Transverse colon (tissue), 4 donors: ENCODE measurements at regions of chr21 and their contacts with region 1.

Region 1: DNA sequence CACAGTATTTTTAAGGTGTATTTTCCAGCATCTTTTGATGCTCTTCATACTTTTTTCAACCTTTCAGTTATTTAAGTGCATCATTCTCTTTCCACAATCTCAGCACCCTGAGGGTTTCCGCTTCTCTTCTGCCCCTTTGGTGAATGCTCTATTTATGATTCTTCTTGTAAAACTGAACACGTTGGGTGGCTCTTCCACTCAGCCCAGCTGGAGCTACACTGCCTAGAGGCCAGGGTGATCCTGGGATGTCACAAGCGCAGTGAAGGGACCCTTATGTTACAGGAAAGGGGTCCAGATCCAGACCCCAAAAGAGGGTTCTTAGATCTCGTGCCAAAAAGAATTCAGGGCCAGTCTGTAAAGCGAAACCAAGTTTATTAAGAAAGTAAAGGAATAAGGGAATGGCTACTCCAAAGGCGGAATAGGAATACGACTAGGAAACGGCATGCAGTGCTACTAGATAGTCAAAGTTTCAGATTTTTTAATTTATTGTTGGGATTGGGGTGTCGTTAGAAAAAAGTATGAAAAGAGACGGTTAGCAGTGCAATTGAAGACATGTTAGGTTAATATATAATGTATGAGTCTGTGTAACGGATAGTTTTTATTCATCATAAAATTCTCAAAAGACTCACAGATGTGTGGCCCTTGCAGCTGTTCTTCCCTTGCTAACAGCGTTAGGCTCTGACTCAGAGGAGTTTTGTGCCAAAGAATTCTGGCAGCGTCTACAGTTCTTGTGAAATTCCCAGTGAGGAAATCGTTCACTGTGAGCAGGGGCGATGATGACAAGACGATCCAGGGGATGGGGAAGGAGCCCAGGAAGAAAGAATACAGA is 14.4 kb upstream of the ERVH48-1 start:
- DNase-seq: peak; percentile 73
- H3K4me3 ChIP-seq: no peak overlapping the region
- H3K27ac ChIP-seq: peak overlapping the region; percentile 71 to 81 (median 76)
- H3K4me1 ChIP-seq: peaks cover 0 to 8% (median 7%) of the 10 kb centered on the region in 4 donors
- H3K27me3 ChIP-seq: no peaks in the 10 kb centered on the region
- CTCF ChIP-seq: no peak
- EP300 ChIP-seq: no peak
- POLR2A ChIP-seq: no peak

Region 2: DNA sequence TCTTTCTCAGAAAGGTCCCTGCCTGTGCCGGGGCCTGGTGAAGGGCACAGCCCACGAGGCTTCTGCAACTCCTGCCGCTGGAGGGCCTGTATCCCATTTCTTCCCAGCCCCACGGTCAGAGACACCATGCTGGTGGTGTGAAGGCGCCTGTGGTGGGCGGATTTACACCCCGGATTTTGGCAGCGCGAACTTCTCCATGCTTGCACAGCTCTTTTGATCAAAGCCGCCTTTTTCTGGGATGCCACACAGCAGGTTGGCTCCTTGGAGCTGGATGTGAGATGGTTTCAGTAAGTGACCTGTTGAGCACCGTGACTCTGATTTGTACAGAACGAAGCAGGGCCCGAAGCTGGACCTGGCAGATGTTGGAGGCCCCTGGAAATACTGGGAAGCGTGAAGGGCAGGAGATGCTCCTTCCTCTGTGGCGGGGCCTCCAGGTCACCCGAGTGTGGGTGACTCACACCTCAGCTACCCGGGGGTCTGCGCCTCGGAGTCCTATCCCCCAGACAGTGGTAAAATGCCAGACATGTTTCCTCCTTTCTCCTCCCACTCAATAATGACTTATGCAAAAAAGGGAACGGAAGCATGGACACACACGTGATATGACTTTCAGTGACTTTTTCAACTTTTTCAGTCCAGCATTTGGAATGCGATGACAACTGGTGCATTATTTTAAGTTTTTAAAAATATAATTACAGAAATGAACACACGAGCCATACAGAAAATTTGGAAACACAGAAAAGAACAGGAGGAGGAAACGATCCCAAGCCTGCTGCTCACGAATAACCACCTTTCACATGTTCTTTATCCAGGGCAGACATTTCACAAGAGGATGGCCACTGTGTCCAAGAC is 859.6 kb before region 1 on chr21:
- in situ Hi-C with region 1: loop called in 1 of 4 experiments (anchors 5 kb)
- intact Hi-C with region 1: no loop called
- DNase-seq: no peak
- H3K4me3 ChIP-seq: no peak overlapping the region
- H3K27ac ChIP-seq: no peak overlapping the region
- H3K4me1 ChIP-seq: no peaks in the 10 kb centered on the region
- H3K27me3 ChIP-seq: no peaks in the 10 kb centered on the region
- CTCF ChIP-seq: no peak
- EP300 ChIP-seq: no peak
- POLR2A ChIP-seq: no peak

Region 3: DNA sequence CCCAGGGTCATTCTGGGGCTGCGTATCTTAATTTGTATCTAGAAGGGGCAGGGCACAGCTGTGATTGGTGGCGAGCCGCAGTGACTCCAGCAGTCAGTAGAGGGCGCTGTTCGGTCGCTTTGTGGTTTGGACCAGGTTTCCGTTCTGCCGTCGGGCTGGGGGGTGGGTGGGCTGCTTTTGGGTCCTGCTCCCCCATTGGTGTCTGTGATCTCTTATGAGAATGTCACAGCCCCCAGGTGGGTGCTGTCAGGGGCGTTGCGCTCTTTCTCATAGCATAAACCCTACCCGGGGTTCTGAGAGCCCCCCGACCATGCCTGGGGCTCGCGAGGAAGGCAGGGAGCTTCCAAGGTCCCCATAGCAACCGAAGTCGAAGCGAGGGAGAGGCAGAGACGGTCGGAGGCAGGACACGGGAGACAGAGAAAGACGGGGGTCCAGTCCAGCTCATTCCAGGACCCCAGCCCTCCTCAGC is 630.0 kb before region 1 on chr21:
- in situ Hi-C with region 1: no loop called
- intact Hi-C with region 1: no loop called
- DNase-seq: peak; percentile 80
- H3K4me3 ChIP-seq: no peak overlapping the region
- H3K27ac ChIP-seq: peak overlapping the region; percentile 4 to 87 (median 82)
- H3K4me1 ChIP-seq: peaks cover 18 to 45% (median 24%) of the 10 kb centered on the region in 4 donors
- H3K27me3 ChIP-seq: peaks cover 11% of the 10 kb centered on the region
- CTCF ChIP-seq: peak; percentile 70 to 90 (median 86)
- EP300 ChIP-seq: no peak
- POLR2A ChIP-seq: peak; percentile 18

Region 4: DNA sequence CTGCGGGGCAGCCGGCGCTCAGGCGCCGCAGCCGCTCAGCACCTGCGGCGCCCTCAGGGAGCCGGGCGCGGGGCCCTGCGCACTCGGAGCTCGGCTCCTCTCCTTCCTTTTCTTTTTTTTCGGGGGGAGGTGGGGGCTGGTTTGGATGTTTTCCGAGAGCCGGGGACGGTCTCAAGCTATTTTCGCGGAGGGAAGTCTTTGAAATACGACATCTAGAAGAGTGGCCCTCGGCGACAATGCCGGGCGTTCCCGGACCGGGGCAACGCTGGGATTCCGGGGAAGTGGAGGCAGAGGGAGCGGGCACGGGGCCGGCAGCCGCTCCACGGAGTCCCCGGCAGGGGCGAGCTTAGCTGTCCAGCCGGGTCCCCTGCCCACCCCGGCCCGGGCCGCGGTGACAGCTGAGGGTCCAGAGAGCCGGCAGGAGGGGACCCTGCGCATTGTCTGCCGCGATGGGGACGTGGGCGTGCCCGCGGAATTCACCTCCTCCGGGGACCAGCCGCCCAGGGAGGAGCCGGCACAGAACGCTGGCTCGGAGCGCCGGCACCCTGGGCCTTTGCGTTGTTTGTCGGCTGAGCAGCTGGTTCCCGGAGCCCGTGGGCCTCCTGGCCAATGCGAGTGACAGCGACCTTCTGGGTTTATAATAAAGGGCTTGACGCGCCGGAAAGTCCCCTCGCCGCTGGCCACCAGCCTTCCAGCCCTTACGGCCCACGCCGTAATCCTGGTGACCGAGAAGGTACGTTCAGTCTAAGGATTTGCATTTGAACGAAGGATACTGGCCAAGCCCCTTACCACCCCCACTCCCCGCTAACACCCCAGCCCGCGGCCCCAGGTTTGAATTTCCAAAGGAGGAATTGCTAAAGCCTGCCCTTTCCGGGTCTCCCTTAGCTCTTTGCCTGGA is 425.6 kb before region 1 on chr21:
- in situ Hi-C with region 1: no loop called
- intact Hi-C with region 1: no loop called
- DNase-seq: peak; percentile 74
- H3K4me3 ChIP-seq: peak overlapping the region; percentile 79 to 94 (median 92)
- H3K27ac ChIP-seq: peak overlapping the region; percentile 86 to 92 (median 89)
- H3K4me1 ChIP-seq: peaks cover 3 to 39% (median 23%) of the 10 kb centered on the region in 4 donors
- H3K27me3 ChIP-seq: no peaks in the 10 kb centered on the region
- CTCF ChIP-seq: no peak
- EP300 ChIP-seq: no peak
- POLR2A ChIP-seq: peak; percentile 82

Region 5: DNA sequence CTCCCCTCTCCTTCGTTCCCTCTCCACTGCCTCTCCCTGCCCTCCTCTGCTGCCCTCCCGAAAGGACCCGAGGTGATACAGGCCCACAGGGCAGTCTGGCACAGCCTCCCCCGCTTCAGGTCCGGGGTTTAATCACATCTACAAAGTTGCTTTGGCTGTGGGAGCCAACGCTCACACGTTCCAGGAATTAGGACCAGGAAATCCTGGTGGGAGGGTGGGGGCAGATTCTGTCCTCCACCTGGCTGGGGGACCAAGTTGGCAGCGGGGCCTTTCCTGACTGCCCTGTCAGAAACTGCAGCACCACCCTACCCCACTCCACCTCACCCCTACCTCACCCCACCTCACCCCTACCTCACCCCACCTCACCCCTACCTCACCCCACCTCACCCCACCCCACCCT is 155.5 kb before region 1 on chr21:
- in situ Hi-C with region 1: no loop called
- intact Hi-C with region 1: no loop called
- DNase-seq: no peak
- H3K4me3 ChIP-seq: no peak overlapping the region
- H3K27ac ChIP-seq: peak overlapping the region; percentile 36 to 73 (median 48)
- H3K4me1 ChIP-seq: peaks cover 0 to 24% (median 18%) of the 10 kb centered on the region in 4 donors
- H3K27me3 ChIP-seq: peaks cover 1% of the 10 kb centered on the region
- CTCF ChIP-seq: no peak
- EP300 ChIP-seq: no peak
- POLR2A ChIP-seq: no peak